ENCODE measurements at regions of chr5 and their contacts with region 1.

Region 1: GRCh38 chr5:142922223-142922952 is 152.2 kb downstream of the ARHGAP26 start:
- DNase-seq: no peak
- ATAC-seq: peak; percentile 51

Region 2: GRCh38 chr5:142959683-142960657 is 37.6 kb after region 1 on chr5:
- intact Hi-C with region 1: loop called (anchors 2 kb)
- DNase-seq: no peak
- ATAC-seq: no peak

Region 3: GRCh38 chr5:143066556-143067281 is 144.3 kb after region 1 on chr5:
- intact Hi-C with region 1: loop called (anchors 10 kb)
- DNase-seq: peak; percentile 41
- ATAC-seq: peak; percentile 15

Measured in left ventricle myocardium superior (tissue), 1 donor.